Activated B cell treated with CpG ODN at 0.5 μM for 24 hours (primary cell): ENCODE measurements at regions of chr10 and their contacts with region 1.

Region 1: GRCh38 chr10:45557275-45557905 is 115.2 kb downstream of the ZFAND4 start:
- DNase-seq: no peak
- ATAC-seq: peak; percentile 76
- H3K4me3 Mint-ChIP-seq: peak overlapping the region; percentile 42
- H3K27ac Mint-ChIP-seq: peak overlapping the region; percentile 75
- H3K4me1 Mint-ChIP-seq: peaks cover 53% of the 10 kb centered on the region
- H3K27me3 Mint-ChIP-seq: no peaks in the 10 kb centered on the region
- CTCF ChIP-seq: no peak

Region 2: GRCh38 chr10:45580371-45581215 is 23.2 kb after region 1 on chr10:
- CTCF ChIA-PET with region 1: no interaction called
- POLR2A ChIA-PET with region 1: no interaction called
- intact Hi-C with region 1: loop called (anchors 2 kb)
- DNase-seq: peak; percentile 20
- ATAC-seq: peak; percentile 82
- H3K4me3 Mint-ChIP-seq: peak overlapping the region; percentile 89
- H3K27ac Mint-ChIP-seq: peak overlapping the region; percentile 97
- H3K4me1 Mint-ChIP-seq: peaks cover 33% of the 10 kb centered on the region
- H3K27me3 Mint-ChIP-seq: no peaks in the 10 kb centered on the region
- CTCF ChIP-seq: no peak